Vagina (tissue), 2 donors: ENCODE measurements at regions of chr20 and their contacts with region 1.

Region 1: GRCh38 chr20:43457640-43458421 is at the start of gene SRSF6:
- DNase-seq: peak in 1 of 2 donors; percentile 96
- H3K4me3 ChIP-seq: peak within 1 kb of the TSS; percentile 99 to 100
- H3K27ac ChIP-seq: peak within 1 kb of the TSS; percentile 100
- H3K4me1 ChIP-seq: peaks cover 29% of the 10 kb centered on the region
- H3K27me3 ChIP-seq: no peaks in the 10 kb centered on the region
- CTCF ChIP-seq: no peak
- POLR2A ChIP-seq: peak; percentile 66 to 98
- total RNA-seq, gene SRSF6: 112 TPM

Region 2: GRCh38 chr20:42204203-42204942 is 1253.5 kb before region 1 on chr20:
- intact Hi-C with region 1: no loop called
- DNase-seq: no peak
- H3K4me3 ChIP-seq: no peak overlapping the region
- H3K27ac ChIP-seq: no peak overlapping the region
- H3K4me1 ChIP-seq: no peaks in the 10 kb centered on the region
- H3K27me3 ChIP-seq: no peaks in the 10 kb centered on the region
- CTCF ChIP-seq: peak in 1 of 3 experiments; percentile 16
- POLR2A ChIP-seq: no peak

Region 3: GRCh38 chr20:42846784-42847490 is 610.9 kb before region 1 on chr20:
- intact Hi-C with region 1: no loop called
- DNase-seq: no peak
- H3K4me3 ChIP-seq: no peak overlapping the region
- H3K27ac ChIP-seq: no peak overlapping the region
- H3K4me1 ChIP-seq: no peaks in the 10 kb centered on the region
- H3K27me3 ChIP-seq: no peaks in the 10 kb centered on the region
- CTCF ChIP-seq: no peak
- POLR2A ChIP-seq: no peak

Region 4: DNA sequence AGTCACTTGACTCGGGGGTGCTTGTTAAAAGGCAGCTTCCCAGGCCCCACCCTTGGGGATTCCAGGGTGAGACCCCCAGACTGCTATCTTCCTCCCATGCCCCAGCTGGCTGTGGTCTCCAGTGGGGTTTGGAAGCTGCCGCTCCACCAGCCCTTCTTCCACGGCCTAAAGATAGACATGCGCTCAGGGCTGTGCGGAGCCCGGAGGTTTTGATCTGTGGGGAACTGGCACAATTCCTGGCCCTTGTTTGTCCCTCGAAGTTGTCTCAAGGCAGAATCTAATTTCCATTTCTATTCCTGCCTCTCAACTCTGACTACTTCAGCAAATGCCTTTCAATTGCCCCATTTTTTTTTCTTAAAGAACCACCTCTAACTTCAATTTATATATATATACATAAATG is 120.8 kb before region 1 on chr20:
- intact Hi-C with region 1: no loop called
- DNase-seq: no peak
- H3K4me3 ChIP-seq: no peak overlapping the region
- H3K27ac ChIP-seq: no peak overlapping the region
- H3K4me1 ChIP-seq: no peaks in the 10 kb centered on the region
- H3K27me3 ChIP-seq: no peaks in the 10 kb centered on the region
- CTCF ChIP-seq: no peak
- POLR2A ChIP-seq: no peak

Region 5: DNA sequence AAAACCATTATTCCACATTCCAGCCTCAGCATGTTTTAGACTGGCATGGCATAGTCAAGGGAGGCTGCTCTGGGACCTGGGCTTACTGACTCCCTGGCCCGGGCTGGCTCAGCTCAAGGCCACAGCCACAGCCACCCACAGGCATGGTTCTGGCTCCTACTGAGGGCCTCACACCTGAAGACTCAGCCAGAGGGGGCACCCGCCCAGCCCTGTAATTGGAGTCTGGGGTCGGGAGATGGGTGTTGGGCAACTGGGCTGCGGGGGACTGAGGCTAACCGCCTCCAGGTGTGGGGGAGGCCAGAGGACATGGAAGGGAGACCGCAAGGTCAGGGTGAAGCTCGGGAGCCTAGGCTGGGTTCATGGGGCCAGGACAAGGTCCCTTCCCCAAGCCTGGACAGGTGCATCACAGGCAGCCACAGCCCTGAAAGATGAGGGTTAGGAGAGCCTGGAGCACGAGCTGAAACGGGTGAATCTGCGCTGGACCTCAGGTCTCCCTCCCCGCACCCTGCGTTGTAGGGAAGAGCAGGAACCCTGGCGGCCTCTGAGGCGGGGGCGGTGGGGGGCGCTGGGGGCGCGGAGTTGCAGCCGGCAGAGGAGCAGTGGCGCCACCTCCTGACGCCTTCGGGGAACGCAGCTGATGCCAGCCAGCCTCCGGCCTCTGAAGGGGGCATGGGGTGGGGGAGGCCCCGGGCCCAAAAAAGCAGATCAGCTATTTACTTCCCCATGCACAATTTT is 67.8 kb before region 1 on chr20:
- intact Hi-C with region 1: no loop called
- DNase-seq: no peak
- H3K4me3 ChIP-seq: no peak overlapping the region
- H3K27ac ChIP-seq: no peak overlapping the region
- H3K4me1 ChIP-seq: no peaks in the 10 kb centered on the region
- H3K27me3 ChIP-seq: no peaks in the 10 kb centered on the region
- CTCF ChIP-seq: no peak
- POLR2A ChIP-seq: no peak

Region 6: GRCh38 chr20:43514062-43514999 is 56.5 kb after region 1 on chr20:
- intact Hi-C with region 1: loop called (anchors 2 kb)
- DNase-seq: peak in 1 of 2 donors; percentile 98
- H3K4me3 ChIP-seq: peak overlapping the region; percentile 53 to 71
- H3K27ac ChIP-seq: peak overlapping the region; percentile 64
- H3K4me1 ChIP-seq: peaks cover 22% of the 10 kb centered on the region
- H3K27me3 ChIP-seq: no peaks in the 10 kb centered on the region
- CTCF ChIP-seq: no peak
- POLR2A ChIP-seq: no peak